Natural killer cell (primary cell): ENCODE measurements at regions of chr5 and their contacts with region 1.

Region 1: GRCh38 chr5:127030259-127031146 is at the start of gene MARCHF3:
- DNase-seq: peak; percentile 96 to 97
- ATAC-seq: peak; percentile 91 to 98 (median 92)
- H3K4me3 ChIP-seq: peak within 1 kb of the TSS; percentile 57
- H3K4me3 Mint-ChIP-seq: peak within 1 kb of the TSS; percentile 88
- H3K27ac ChIP-seq: peak within 1 kb of the TSS; percentile 58
- H3K27ac Mint-ChIP-seq: peak within 1 kb of the TSS; percentile 77 to 82
- H3K4me1 ChIP-seq: peaks cover 22% of the 10 kb centered on the region
- H3K4me1 Mint-ChIP-seq: peaks cover 14 to 24% of the 10 kb centered on the region in 2 donors
- H3K27me3 ChIP-seq: peaks cover 3% of the 10 kb centered on the region
- H3K27me3 Mint-ChIP-seq: peaks cover 0 to 23% of the 10 kb centered on the region in 2 donors
- CTCF ChIP-seq: peak; percentile 13
- total RNA-seq, gene MARCHF3: 6.8 to 11.2 (median 8.9) TPM

Region 2: GRCh38 chr5:126808521-126808988 is 221.9 kb before region 1 on chr5:
- intact Hi-C with region 1: loop called (anchors 1 kb)
- DNase-seq: peak in 1 of 2 donors; percentile 53
- ATAC-seq: no peak
- H3K4me3 ChIP-seq: no peak overlapping the region
- H3K4me3 Mint-ChIP-seq: no peak overlapping the region
- H3K27ac ChIP-seq: peak overlapping the region; percentile 4
- H3K27ac Mint-ChIP-seq: peak overlapping the region; percentile 94 to 95
- H3K4me1 ChIP-seq: peaks cover 20% of the 10 kb centered on the region
- H3K4me1 Mint-ChIP-seq: peaks cover 27 to 31% of the 10 kb centered on the region in 2 donors
- H3K27me3 ChIP-seq: no peaks in the 10 kb centered on the region
- H3K27me3 Mint-ChIP-seq: no peaks in the 10 kb centered on the region
- CTCF ChIP-seq: peak; percentile 63

Region 3: GRCh38 chr5:126816649-126817048 is 213.9 kb before region 1 on chr5:
- intact Hi-C with region 1: loop called (anchors 1 kb)
- DNase-seq: peak; percentile 38 to 49
- ATAC-seq: peak; percentile 61 to 81 (median 78)
- H3K4me3 ChIP-seq: no peak overlapping the region
- H3K4me3 Mint-ChIP-seq: peak overlapping the region; percentile 76
- H3K27ac ChIP-seq: no peak overlapping the region
- H3K27ac Mint-ChIP-seq: peak overlapping the region; percentile 91 to 98
- H3K4me1 ChIP-seq: peaks cover 9% of the 10 kb centered on the region
- H3K4me1 Mint-ChIP-seq: peaks cover 26 to 31% of the 10 kb centered on the region in 2 donors
- H3K27me3 ChIP-seq: no peaks in the 10 kb centered on the region
- H3K27me3 Mint-ChIP-seq: no peaks in the 10 kb centered on the region
- CTCF ChIP-seq: no peak

Region 4: GRCh38 chr5:126852091-126852571 is 178.4 kb before region 1 on chr5:
- intact Hi-C with region 1: loop called (anchors 5 kb)
- DNase-seq: peak in 1 of 2 donors; percentile 66
- ATAC-seq: peak; percentile 61 to 73 (median 72)
- H3K4me3 ChIP-seq: no peak overlapping the region
- H3K4me3 Mint-ChIP-seq: peak overlapping the region; percentile 77
- H3K27ac ChIP-seq: peak overlapping the region; percentile 79
- H3K27ac Mint-ChIP-seq: peak overlapping the region; percentile 94 to 95
- H3K4me1 ChIP-seq: peaks cover 26% of the 10 kb centered on the region
- H3K4me1 Mint-ChIP-seq: peaks cover 39% of the 10 kb centered on the region in 2 donors
- H3K27me3 ChIP-seq: no peaks in the 10 kb centered on the region
- H3K27me3 Mint-ChIP-seq: no peaks in the 10 kb centered on the region
- CTCF ChIP-seq: no peak

Region 5: GRCh38 chr5:126972062-126972895 is 58.2 kb before region 1 on chr5:
- intact Hi-C with region 1: loop called (anchors 1 kb)
- DNase-seq: peak; percentile 52 to 68
- ATAC-seq: peak; percentile 84 to 94 (median 93)
- H3K4me3 ChIP-seq: peak overlapping the region; percentile 9
- H3K4me3 Mint-ChIP-seq: peak overlapping the region; percentile 85
- H3K27ac ChIP-seq: peak overlapping the region; percentile 85
- H3K27ac Mint-ChIP-seq: peak overlapping the region; percentile 92 to 99
- H3K4me1 ChIP-seq: peaks cover 10% of the 10 kb centered on the region
- H3K4me1 Mint-ChIP-seq: peaks cover 47 to 51% of the 10 kb centered on the region in 2 donors
- H3K27me3 ChIP-seq: no peaks in the 10 kb centered on the region
- H3K27me3 Mint-ChIP-seq: no peaks in the 10 kb centered on the region
- CTCF ChIP-seq: no peak

Region 6: GRCh38 chr5:127072861-127073846 is 42.7 kb after region 1 on chr5 and contains the start of gene C5orf63:
- intact Hi-C with region 1: loop called (anchors 2 kb)
- DNase-seq: peak; percentile 64 to 80
- ATAC-seq: peak; percentile 93 to 98 (median 97)
- H3K4me3 ChIP-seq: peak within 1 kb of the TSS; percentile 70
- H3K4me3 Mint-ChIP-seq: peak within 1 kb of the TSS; percentile 98
- H3K27ac ChIP-seq: peak within 1 kb of the TSS; percentile 46
- H3K27ac Mint-ChIP-seq: peak within 1 kb of the TSS; percentile 91 to 94
- H3K4me1 ChIP-seq: peaks cover 9% of the 10 kb centered on the region
- H3K4me1 Mint-ChIP-seq: peaks cover 17 to 27% of the 10 kb centered on the region in 2 donors
- H3K27me3 ChIP-seq: no peaks in the 10 kb centered on the region
- H3K27me3 Mint-ChIP-seq: no peaks in the 10 kb centered on the region
- CTCF ChIP-seq: no peak
- total RNA-seq, gene C5orf63: 10.4 to 18.8 (median 11.7) TPM

Region 7: GRCh38 chr5:128083033-128083810 is 1052.7 kb after region 1 on chr5 and contains the start of gene SLC12A2:
- intact Hi-C with region 1: loop called (anchors 5 kb)
- DNase-seq: peak; percentile 91 to 98
- ATAC-seq: peak; percentile 70 to 85 (median 73)
- H3K4me3 ChIP-seq: peak within 1 kb of the TSS; percentile 74
- H3K4me3 Mint-ChIP-seq: peak within 1 kb of the TSS; percentile 89
- H3K27ac ChIP-seq: peak within 1 kb of the TSS; percentile 91
- H3K27ac Mint-ChIP-seq: peak within 1 kb of the TSS; percentile 91 to 93
- H3K4me1 ChIP-seq: peaks cover 17% of the 10 kb centered on the region
- H3K4me1 Mint-ChIP-seq: peaks cover 49% of the 10 kb centered on the region in 2 donors
- H3K27me3 ChIP-seq: no peaks in the 10 kb centered on the region
- H3K27me3 Mint-ChIP-seq: no peaks in the 10 kb centered on the region
- CTCF ChIP-seq: no peak
- total RNA-seq, gene SLC12A2: 14.3 to 18.1 (median 17.4) TPM